ENCODE measurements at regions of chr1 and their contacts with region 1.

Region 1: GRCh38 chr1:203340112-203340804 is 10.7 kb downstream of the FMOD start:
- DNase-seq: peak; percentile 92
- H3K4me3 Mint-ChIP-seq: no peak overlapping the region
- H3K27ac Mint-ChIP-seq: no peak overlapping the region
- H3K4me1 Mint-ChIP-seq: peaks cover 6% of the 10 kb centered on the region
- H3K27me3 Mint-ChIP-seq: peaks cover 56% of the 10 kb centered on the region
- CTCF ChIP-seq: peak; percentile 95

Region 2: GRCh38 chr1:202982715-202983430 is 357.4 kb before region 1 on chr1:
- CTCF ChIA-PET with region 1: no interaction called
- POLR2A ChIA-PET with region 1: no interaction called
- intact Hi-C with region 1: no loop called
- DNase-seq: peak; percentile 64
- H3K4me3 Mint-ChIP-seq: no peak overlapping the region
- H3K27ac Mint-ChIP-seq: no peak overlapping the region
- H3K4me1 Mint-ChIP-seq: no peaks in the 10 kb centered on the region
- H3K27me3 Mint-ChIP-seq: peaks cover 30% of the 10 kb centered on the region
- CTCF ChIP-seq: no peak

Region 3: DNA sequence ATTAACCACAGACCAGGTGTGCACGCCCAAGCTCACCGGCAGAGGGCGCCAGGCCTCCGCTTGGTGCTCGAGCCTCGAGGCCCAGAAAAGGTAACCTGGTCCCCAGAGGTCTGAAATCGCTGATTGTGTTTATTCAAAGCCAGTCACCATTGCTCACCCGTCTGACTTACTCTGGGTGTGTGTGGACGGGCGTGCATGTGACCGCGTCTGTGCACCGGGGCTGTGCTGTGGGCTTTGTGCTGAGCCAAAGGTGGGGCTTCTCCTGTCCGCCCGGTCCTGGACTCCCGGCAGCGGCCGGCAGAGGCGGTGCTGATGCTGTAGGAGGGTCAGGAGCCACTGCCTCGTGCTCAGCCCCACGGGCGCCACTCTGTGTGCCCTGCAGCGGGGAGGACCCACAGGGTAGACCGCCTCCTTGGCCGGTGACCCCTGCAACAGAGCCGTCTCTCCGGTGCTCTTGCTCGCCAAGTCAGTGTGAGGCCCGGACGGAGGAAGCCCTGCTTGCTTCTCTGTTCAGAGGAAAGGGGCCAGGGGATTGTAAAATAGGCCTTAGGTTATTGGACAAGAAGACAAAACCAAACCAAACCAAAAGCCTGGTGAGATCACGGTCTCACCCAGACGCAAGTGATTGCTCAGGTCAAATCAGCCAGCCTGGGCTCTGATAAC is 66.9 kb before region 1 on chr1:
- CTCF ChIA-PET with region 1: interaction called, 980 read pairs
- POLR2A ChIA-PET with region 1: interaction called, 23 read pairs
- intact Hi-C with region 1: loop called (anchors 1 kb)
- DNase-seq: peak; percentile 96
- H3K4me3 Mint-ChIP-seq: peak overlapping the region; percentile 28
- H3K27ac Mint-ChIP-seq: no peak overlapping the region
- H3K4me1 Mint-ChIP-seq: peaks cover 3% of the 10 kb centered on the region
- H3K27me3 Mint-ChIP-seq: no peaks in the 10 kb centered on the region
- CTCF ChIP-seq: peak; percentile 100

Region 4: GRCh38 chr1:203326830-203327683 is 13.2 kb before region 1 on chr1:
- CTCF ChIA-PET with region 1: interaction called, 154 read pairs
- POLR2A ChIA-PET with region 1: interaction called, 14 read pairs
- intact Hi-C with region 1: no loop called
- DNase-seq: peak; percentile 97
- H3K4me3 Mint-ChIP-seq: peak overlapping the region; percentile 71
- H3K27ac Mint-ChIP-seq: peak overlapping the region; percentile 57
- H3K4me1 Mint-ChIP-seq: peaks cover 32% of the 10 kb centered on the region
- H3K27me3 Mint-ChIP-seq: peaks cover 16% of the 10 kb centered on the region
- CTCF ChIP-seq: no peak

Region 5: DNA sequence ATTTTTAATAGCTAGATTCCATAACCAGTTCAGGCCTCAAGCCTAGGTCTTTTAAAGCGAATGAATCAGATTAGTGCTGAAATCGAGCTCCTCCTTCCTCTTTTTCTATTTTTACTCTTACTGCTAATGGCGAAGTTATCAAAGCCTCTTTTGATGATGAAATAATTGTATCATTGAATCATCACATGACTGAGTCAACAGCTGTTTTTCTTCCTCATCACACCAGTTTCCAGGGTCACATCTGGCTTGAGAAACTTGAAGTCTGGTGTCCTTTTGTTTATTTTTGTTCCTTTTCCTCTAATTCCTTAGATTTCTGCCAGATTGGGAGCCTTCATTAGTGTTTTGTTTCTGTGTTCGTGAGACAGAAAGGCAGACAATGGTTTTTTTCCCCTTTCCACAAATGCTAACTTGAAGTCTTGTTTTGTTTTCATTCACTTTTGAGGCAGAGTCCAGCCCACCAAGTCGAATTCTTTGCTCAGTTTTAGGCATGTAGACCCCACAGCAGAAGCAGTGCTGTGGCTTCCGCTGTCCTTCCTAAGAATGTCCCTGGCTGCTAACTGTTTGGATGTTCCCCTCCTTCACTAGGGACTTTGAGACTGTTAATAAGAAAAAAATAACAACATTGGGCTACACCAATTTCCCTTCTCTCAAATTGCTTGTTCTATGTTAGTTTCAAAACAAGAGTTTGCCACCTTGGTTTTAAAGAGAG is 62.5 kb after region 1 on chr1:
- CTCF ChIA-PET with region 1: interaction called, 27 read pairs
- POLR2A ChIA-PET with region 1: interaction called, 3 read pairs
- intact Hi-C with region 1: no loop called
- DNase-seq: peak; percentile 58
- H3K4me3 Mint-ChIP-seq: no peak overlapping the region
- H3K27ac Mint-ChIP-seq: peak overlapping the region; percentile 13
- H3K4me1 Mint-ChIP-seq: peaks cover 13% of the 10 kb centered on the region
- H3K27me3 Mint-ChIP-seq: peaks cover 18% of the 10 kb centered on the region
- CTCF ChIP-seq: no peak

Region 6: GRCh38 chr1:203486618-203487370 is 146.5 kb after region 1 on chr1:
- CTCF ChIA-PET with region 1: interaction called, 981 read pairs
- POLR2A ChIA-PET with region 1: interaction called, 5 read pairs
- intact Hi-C with region 1: loop called (anchors 1 kb)
- DNase-seq: no peak
- H3K4me3 Mint-ChIP-seq: peak overlapping the region; percentile 66
- H3K27ac Mint-ChIP-seq: peak overlapping the region; percentile 26
- H3K4me1 Mint-ChIP-seq: peaks cover 6% of the 10 kb centered on the region
- H3K27me3 Mint-ChIP-seq: peaks cover 7% of the 10 kb centered on the region
- CTCF ChIP-seq: no peak

Region 7: DNA sequence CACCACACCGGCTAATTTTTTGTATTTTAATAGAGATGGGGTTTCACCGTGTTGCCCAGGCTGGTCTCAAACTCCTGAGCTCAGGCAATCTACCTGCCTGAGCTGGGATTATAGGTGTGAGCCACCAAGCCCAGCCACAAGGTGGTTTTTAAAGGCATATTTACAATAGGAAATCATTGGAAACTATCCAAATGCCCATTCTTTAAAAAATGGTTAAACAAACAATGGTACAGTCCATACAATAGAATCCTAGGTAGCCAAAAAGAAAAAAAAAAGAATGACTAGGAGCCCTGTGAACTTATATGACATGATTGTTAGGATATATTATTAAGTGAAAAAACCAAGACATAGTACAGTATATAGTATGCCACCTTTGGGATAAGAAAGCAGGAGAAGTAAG is 291.7 kb after region 1 on chr1:
- CTCF ChIA-PET with region 1: no interaction called
- POLR2A ChIA-PET with region 1: no interaction called
- intact Hi-C with region 1: no loop called
- DNase-seq: no peak
- H3K4me3 Mint-ChIP-seq: no peak overlapping the region
- H3K27ac Mint-ChIP-seq: no peak overlapping the region
- H3K4me1 Mint-ChIP-seq: peaks cover 37% of the 10 kb centered on the region
- H3K27me3 Mint-ChIP-seq: no peaks in the 10 kb centered on the region
- CTCF ChIP-seq: no peak

Region 8: DNA sequence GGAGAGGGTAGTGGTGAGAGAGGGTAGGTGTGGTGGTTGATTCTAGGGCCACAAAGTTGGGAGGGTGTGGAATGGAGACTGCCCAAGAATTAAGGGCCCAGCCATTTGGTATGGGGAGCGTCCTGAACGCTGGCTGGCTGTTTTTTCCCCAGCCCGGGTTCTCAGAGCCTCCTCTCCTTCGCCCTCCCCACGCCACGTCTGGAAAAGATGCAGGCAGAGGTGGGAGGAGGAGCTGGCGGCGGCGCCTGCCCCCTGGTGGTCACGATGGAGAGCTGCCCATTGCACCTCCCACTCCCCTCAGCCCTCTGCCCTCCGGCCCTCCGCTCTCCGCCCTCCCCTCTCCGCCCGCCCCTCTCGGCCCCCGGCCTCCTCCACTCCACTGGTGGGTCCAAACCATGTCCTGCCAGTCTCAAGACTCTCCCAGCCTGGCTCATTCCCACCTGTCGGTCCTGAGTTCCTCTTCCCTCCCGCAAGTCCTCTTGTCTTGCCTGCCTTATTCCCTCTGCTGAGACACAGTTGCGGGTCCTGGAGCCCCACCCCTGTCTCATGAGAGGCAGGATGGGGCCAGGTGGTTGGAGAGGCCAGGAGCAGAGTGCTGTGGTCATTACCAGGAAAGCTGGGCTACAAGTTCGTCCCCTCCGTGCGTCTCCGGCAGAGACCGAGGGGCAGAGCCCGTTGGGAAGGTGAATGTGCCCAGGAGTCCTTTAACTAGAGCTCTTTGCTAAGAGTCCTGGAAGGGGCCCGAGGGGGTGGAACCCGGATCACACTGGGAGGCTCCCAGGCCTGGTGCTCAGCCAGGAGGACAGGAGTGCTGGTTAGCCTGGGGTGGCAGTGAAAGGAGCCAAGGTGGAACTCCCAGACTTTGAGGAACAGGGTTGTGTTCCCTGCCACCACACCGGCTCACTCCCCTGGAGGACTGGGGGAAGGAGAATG is 789.0 kb after region 1 on chr1:
- CTCF ChIA-PET with region 1: no interaction called
- POLR2A ChIA-PET with region 1: no interaction called
- intact Hi-C with region 1: loop called (anchors 5 kb)
- DNase-seq: peak; percentile 86
- H3K4me3 Mint-ChIP-seq: peak overlapping the region; percentile 68
- H3K27ac Mint-ChIP-seq: peak overlapping the region; percentile 63
- H3K4me1 Mint-ChIP-seq: peaks cover 58% of the 10 kb centered on the region
- H3K27me3 Mint-ChIP-seq: no peaks in the 10 kb centered on the region
- CTCF ChIP-seq: peak; percentile 100